Ovary (tissue), 10 donors: ENCODE measurements at regions of chr17 and their contacts with region 1.

Region 1: GRCh38 chr17:36034127-36034526 is 16.4 kb upstream of the CCL23 start:
- DNase-seq: no peak
- H3K4me3 ChIP-seq: no peak overlapping the region
- H3K27ac ChIP-seq: no peak overlapping the region
- H3K4me1 ChIP-seq: no peaks in the 10 kb centered on the region
- H3K27me3 ChIP-seq: no peaks in the 10 kb centered on the region
- CTCF ChIP-seq: no peak
- EP300 ChIP-seq: no peak
- POLR2A ChIP-seq: no peak

Region 2: GRCh38 chr17:35942588-35943186 is 91.4 kb before region 1 on chr17:
- intact Hi-C with region 1: no loop called
- DNase-seq: no peak
- H3K4me3 ChIP-seq: no peak overlapping the region
- H3K27ac ChIP-seq: no peak overlapping the region
- H3K4me1 ChIP-seq: no peaks in the 10 kb centered on the region
- H3K27me3 ChIP-seq: no peaks in the 10 kb centered on the region
- CTCF ChIP-seq: no peak
- EP300 ChIP-seq: no peak
- POLR2A ChIP-seq: no peak

Region 3: GRCh38 chr17:37247825-37248224 is 1213.7 kb after region 1 on chr17:
- intact Hi-C with region 1: loop called in 1 of 4 experiments (anchors 5 kb)
- DNase-seq: no peak
- H3K4me3 ChIP-seq: no peak overlapping the region
- H3K27ac ChIP-seq: no peak overlapping the region
- H3K4me1 ChIP-seq: no peaks in the 10 kb centered on the region
- H3K27me3 ChIP-seq: no peaks in the 10 kb centered on the region
- CTCF ChIP-seq: no peak
- EP300 ChIP-seq: no peak
- POLR2A ChIP-seq: no peak